ENCODE measurements at regions of chr13 and their contacts with region 1.

Region 1: GRCh38 chr13:73599236-73600128 is 534.7 kb downstream of the KLF12 start:
- DNase-seq: no peak
- H3K4me3 ChIP-seq: no peak overlapping the region
- H3K4me3 Mint-ChIP-seq: no peak overlapping the region
- H3K27ac ChIP-seq: no peak overlapping the region
- H3K27ac Mint-ChIP-seq: no peak overlapping the region
- H3K4me1 ChIP-seq: peaks cover 8% of the 10 kb centered on the region
- H3K4me1 Mint-ChIP-seq: peaks cover 5 to 6% (median 6%) of the 10 kb centered on the region in 3 donors
- H3K27me3 ChIP-seq: no peaks in the 10 kb centered on the region
- H3K27me3 Mint-ChIP-seq: no peaks in the 10 kb centered on the region

Region 2: DNA sequence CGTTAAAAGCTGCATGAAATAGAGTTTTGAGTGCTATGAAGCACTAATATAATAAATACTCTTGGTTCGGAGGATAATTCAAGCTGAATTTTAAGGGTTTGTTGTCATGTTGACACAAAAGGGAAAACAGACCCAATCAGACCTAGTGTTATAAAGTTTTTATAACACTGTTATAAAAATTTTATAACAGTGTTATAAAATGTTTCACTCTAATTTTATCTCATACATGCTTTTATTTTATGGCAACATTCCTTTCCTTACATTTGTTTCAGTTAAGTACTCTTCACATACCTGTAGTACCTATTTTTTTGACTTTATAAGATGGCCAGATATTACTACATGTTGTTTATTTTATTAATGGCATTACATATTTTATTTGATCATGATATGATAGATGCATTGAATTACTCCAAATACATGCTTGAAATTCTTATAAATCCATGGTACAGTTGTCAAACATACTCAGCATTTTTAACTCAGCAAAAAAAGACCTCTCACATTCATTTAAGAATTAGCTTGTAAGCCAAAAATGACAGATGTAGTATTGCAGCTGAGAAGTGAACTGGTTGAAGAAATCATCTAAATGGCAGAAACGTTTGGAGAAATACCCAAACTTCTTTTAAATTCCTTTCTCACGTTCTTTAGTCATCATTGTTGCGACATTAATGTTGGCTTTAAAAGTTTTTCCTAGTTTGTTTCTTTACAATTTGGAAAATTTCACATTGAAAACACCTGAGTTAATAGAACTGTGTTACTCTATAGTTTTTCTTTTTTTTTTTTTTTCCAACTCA is 713.0 kb before region 1 on chr13:
- CTCF ChIA-PET with region 1: no interaction called
- POLR2A ChIA-PET with region 1: no interaction called
- DNase-seq: no peak
- H3K4me3 ChIP-seq: no peak overlapping the region
- H3K4me3 Mint-ChIP-seq: no peak overlapping the region
- H3K27ac ChIP-seq: no peak overlapping the region
- H3K27ac Mint-ChIP-seq: no peak overlapping the region
- H3K4me1 ChIP-seq: no peaks in the 10 kb centered on the region
- H3K4me1 Mint-ChIP-seq: peaks cover 0 to 3% (median 0%) of the 10 kb centered on the region in 3 donors
- H3K27me3 ChIP-seq: no peaks in the 10 kb centered on the region
- H3K27me3 Mint-ChIP-seq: no peaks in the 10 kb centered on the region

Region 3: DNA sequence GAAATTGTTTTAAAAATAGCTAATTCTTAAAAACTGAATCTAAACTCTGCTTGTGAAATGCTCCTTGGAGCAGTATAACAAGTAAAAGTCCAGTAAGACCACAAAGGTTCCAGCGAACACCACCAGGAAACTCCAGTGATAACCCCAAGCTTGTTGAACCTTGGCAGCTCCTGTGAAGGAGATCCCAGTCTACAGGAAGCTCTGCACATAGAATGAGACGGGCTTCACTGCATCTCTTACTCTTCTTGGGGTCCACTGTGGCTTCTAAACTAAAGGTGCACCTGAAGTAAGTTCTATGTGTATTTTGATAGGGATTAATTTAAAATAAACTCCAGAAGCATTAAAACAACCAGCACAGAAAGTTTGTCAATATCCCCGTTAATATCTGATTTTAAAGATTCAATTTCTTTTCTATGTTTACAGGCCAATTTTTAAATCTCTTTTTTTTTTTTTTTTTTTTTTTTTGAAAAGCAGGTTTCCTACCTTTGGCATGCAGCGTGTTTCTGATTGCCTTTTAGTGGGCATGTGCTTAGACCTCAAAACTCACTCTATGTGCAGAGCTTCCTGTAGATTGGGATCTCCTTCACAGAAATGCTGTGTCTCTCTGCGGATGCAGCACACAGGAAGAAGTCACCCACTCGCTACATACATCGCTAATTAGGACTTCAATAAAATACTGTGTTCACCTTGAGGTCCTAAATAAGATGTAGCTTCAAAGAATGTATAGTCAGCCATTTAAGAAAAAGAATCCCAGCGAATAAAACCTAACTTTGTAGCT is 26.3 kb after region 1 on chr13:
- CTCF ChIA-PET with region 1: no interaction called
- POLR2A ChIA-PET with region 1: interaction called, 11 read pairs
- DNase-seq: peak in 3 of 5 donors; percentile 29 to 52 (median 47)
- H3K4me3 ChIP-seq: no peak overlapping the region
- H3K4me3 Mint-ChIP-seq: peak overlapping the region in 6 of 7 donors; percentile 8 to 69 (median 44)
- H3K27ac ChIP-seq: no peak overlapping the region
- H3K27ac Mint-ChIP-seq: peak overlapping the region in 5 of 8 donors; percentile 14 to 38 (median 32)
- H3K4me1 ChIP-seq: peaks cover 36% of the 10 kb centered on the region
- H3K4me1 Mint-ChIP-seq: peaks cover 17 to 42% (median 36%) of the 10 kb centered on the region in 3 donors
- H3K27me3 ChIP-seq: no peaks in the 10 kb centered on the region
- H3K27me3 Mint-ChIP-seq: no peaks in the 10 kb centered on the region